ENCODE measurements at regions of chr17 and their contacts with region 1.

Region 1: GRCh38 chr17:69607162-69607834 is 192.8 kb downstream of the MAP2K6 start:
- H3K4me3 ChIP-seq: no peak overlapping the region
- H3K27ac ChIP-seq: peak overlapping the region; percentile 32
- H3K4me1 ChIP-seq: peaks cover 7% of the 10 kb centered on the region
- CTCF ChIP-seq: peak; percentile 77

Region 2: GRCh38 chr17:69567130-69567529 is 40.2 kb before region 1 on chr17:
- CTCF ChIA-PET with region 1: interaction called, 20 read pairs
- POLR2A ChIA-PET with region 1: no interaction called
- H3K4me3 ChIP-seq: no peak overlapping the region
- H3K27ac ChIP-seq: no peak overlapping the region
- H3K4me1 ChIP-seq: no peaks in the 10 kb centered on the region
- CTCF ChIP-seq: no peak

Region 3: GRCh38 chr17:69575346-69575761 is 31.9 kb before region 1 on chr17:
- CTCF ChIA-PET with region 1: interaction called, 25 read pairs
- POLR2A ChIA-PET with region 1: no interaction called
- H3K4me3 ChIP-seq: no peak overlapping the region
- H3K27ac ChIP-seq: peak overlapping the region; percentile 25; the same call in 1 of the 2 replicates
- H3K4me1 ChIP-seq: peaks cover 26% of the 10 kb centered on the region
- CTCF ChIP-seq: no peak

Region 4: DNA sequence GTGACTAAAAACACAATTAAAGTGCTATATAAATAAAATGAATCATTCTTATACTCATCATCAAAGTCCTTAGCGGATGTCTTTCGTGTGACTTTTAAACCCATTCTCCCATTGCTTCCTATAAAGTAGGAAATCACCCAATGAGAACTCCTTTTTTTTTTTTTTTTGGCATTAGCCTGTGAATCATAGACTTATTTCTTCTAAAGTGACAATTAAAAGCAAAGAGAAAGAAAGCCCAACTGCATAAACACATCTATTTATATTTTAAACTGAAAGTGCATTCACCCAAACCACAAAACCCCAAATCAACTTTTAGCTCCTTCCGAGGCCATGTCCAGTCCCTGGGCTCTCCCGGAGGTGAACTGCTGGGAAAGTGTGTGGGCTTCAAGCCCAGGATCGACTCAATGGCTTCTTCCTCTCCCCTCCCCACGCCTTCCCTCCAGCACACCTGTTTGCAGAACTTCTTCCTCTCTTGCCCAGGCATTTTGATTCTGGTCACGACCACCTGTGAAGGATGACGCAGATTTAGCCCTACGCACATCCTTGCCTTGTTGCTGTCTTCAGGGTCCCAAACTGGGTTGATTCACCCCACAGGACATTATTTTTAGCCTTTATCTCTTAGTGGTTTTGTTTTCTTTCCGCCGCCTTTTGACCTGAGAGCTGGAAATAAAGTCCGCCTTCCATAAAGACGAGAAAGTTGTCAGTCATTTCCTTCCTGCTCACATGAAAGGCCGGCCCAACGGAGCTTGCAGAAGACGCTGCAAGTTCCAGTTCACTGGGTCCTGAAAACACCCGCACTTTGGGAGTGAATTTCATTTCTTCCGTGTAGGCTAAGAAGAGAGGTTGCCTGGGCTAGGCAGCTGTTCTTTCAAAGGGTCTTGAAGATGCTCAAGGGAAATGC is 26.0 kb before region 1 on chr17:
- CTCF ChIA-PET with region 1: interaction called, 25 read pairs
- POLR2A ChIA-PET with region 1: no interaction called
- H3K4me3 ChIP-seq: no peak overlapping the region
- H3K27ac ChIP-seq: no peak overlapping the region
- H3K4me1 ChIP-seq: peaks cover 6% of the 10 kb centered on the region
- CTCF ChIP-seq: no peak

Region 5: GRCh38 chr17:69592692-69593350 is 14.5 kb before region 1 on chr17:
- CTCF ChIA-PET with region 1: interaction called, 19 read pairs
- POLR2A ChIA-PET with region 1: no interaction called
- H3K4me3 ChIP-seq: no peak overlapping the region
- H3K27ac ChIP-seq: no peak overlapping the region
- H3K4me1 ChIP-seq: peaks cover 10% of the 10 kb centered on the region
- CTCF ChIP-seq: no peak

Region 6: GRCh38 chr17:70144260-70144846 is 537.1 kb after region 1 on chr17:
- CTCF ChIA-PET with region 1: interaction called, 13 read pairs
- POLR2A ChIA-PET with region 1: no interaction called
- H3K4me3 ChIP-seq: no peak overlapping the region
- H3K27ac ChIP-seq: no peak overlapping the region
- H3K4me1 ChIP-seq: no peaks in the 10 kb centered on the region
- CTCF ChIP-seq: peak; percentile 23; the same call in 1 of the 2 replicates

Region 7: DNA sequence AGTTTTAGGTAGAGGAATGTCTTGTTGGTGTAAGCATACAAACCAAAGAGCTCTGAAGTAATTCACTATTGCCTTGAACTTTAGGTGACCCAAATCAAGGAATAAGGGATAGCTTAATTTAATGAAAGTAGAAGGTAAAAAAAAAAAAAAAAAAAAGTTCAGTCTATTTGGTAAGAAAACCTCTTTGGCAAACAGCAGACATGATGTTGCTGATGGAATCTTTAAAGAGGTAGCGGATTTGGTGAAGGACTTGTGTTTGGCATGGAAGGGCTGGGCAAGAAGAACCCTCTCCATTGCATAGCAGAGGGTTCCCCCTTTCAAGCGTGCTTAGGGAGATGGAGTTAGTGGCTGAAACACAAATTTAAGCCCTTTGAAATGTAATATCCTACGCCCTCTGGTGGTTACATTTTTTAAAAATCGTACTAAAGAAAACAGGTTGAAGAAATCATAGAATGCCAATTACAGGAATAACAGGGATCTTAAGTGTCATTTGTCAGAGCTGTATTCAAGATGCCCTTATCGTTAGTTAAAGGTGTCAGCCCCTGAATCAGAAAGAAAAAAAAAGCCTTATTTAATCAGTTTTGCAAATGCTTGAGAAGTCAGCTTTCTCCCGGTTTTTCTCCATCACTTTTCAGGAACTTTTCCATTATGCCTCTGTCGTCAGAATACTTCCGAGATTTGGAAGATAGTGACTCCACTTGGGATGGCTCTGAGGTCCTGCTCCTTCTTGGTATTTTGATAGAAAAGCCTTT is 945.1 kb after region 1 on chr17:
- CTCF ChIA-PET with region 1: interaction called, 16 read pairs
- POLR2A ChIA-PET with region 1: no interaction called
- H3K4me3 ChIP-seq: no peak overlapping the region
- H3K27ac ChIP-seq: no peak overlapping the region
- H3K4me1 ChIP-seq: no peaks in the 10 kb centered on the region; the same call in 1 of the 2 replicates
- CTCF ChIP-seq: no peak

Measured in HEK293 (cell line).